Posterior cingulate gyrus (tissue), 11 donors: ENCODE measurements at regions of chr10 and their contacts with region 1.

Region 1: DNA sequence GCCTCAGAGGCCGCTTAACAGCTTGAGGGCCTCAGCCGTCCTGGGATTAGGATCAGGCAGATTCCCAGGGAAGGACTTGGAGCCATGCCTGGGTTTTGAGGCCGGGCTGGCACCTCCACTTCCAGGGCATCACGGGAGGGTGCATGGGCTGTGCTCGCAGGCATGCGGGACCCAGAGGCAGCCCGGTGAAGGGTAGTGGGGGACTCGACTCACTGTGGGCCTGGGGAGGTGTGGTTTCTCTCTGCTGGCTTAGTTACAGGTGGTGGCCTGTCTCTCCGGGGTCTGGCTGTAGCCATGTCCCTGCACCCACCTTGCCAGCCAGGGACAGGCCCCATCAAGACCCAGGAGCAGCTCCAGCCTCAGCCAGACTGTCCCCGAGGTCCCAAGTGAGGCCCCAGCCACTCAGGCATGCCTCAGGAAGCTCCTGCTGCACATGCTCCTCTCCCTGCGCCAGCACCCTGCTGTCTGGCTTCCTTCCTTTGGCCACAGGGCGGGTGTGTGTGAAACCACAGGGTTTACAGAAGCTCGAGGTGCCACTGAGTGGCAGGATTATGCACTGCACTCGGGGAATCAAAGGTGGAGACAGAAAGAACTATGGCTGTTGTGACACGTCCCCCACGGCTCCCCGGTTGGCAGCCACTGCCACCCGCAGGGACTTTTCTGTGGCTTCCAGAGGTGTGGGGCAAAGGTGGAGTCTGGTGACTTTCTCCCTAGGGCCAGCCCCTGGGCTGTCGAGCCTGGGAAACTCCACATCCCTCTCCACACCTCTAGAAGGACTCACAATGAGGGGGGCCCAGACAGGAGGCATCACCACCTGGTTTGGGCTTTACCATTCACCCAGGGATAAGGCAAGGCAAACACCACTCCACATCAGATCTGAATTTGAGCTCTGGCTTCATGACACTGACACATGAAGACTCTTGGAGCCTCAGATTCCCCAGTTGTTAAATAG is 19.7 kb downstream of the GOLGA7B start:
- DNase-seq: peak; percentile 52 to 98 (median 88)

Region 2: GRCh38 chr10:97759158-97759887 is 110.0 kb before region 1 on chr10:
- intact Hi-C with region 1: loop called (anchors 1 kb)
- DNase-seq: peak; percentile 60 to 96 (median 75)

Region 3: GRCh38 chr10:97792141-97792721 is 77.1 kb before region 1 on chr10:
- intact Hi-C with region 1: loop called (anchors 5 kb)
- DNase-seq: peak; percentile 63 to 96 (median 78)